ENCODE measurements at regions of chr12 and their contacts with region 1.

Region 1: DNA sequence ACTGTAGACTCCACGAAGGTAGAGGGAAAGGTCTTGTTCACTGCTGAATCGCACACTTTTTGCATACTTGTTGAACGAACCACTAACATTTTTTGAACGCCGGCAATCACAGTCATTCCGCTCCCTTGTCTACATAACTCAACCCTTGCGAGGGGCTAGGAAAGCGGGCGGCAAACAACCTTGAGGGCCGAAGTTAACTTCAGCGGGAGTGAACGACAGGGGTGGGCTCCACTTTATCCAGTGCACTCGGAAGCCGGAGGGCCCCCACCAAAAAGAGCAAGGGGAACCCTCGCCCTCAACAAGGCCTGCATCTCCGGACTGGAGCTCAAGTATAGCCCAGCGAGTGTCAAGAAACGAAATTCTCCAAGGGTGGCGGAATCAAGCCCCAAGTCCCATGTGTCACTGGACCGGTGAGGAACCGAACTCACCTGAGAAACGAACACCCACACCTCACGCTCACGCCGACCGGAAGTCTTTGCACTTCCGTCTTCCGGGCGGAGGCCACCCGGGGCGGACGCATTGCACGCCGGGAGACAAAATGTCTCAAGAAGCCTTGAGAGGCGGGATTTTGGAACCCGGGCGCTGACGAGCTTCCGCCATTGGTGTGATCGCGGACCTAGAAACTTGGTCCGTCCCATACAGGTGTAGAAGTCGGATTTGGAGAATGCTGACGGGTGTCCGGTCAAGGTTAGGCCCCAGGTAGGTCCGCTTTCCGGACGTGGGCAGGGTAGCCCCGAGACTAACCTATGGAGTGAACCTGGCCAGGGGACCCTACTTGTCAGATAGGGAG is at the start of gene LLPH:
- DNase-seq: peak; percentile 95
- H3K4me3 ChIP-seq: peak within 1 kb of the TSS; percentile 98
- H3K27ac ChIP-seq: peak within 1 kb of the TSS; percentile 51
- H3K4me1 ChIP-seq: peaks cover 29% of the 10 kb centered on the region
- CTCF ChIP-seq: no peak
- total RNA-seq, gene LLPH: 5.7 and 17.0 TPM in 2 replicates

Region 2: DNA sequence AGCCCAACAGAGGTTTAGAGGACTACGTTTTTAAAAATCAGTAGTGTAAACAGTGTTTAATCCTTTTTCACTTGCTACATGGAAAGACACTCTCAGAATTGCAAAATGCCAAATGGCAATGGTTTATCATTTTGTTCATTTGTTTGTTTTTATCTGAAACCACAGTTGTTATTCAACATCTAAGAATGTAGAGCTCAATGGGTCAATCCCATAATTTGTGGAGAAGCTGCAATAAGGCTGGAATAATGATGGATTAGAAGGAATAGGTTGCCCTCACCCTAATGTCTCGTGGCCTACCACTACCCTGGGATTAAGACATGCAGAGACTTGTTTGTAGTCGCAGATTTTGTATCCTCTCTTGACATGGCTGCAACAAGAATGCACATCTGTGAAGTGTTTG is 115.7 kb before region 1 on chr12:
- CTCF ChIA-PET with region 1: no interaction called
- POLR2A ChIA-PET with region 1: no interaction called
- intact Hi-C with region 1: no loop called
- DNase-seq: no peak
- H3K4me3 ChIP-seq: no peak overlapping the region
- H3K27ac ChIP-seq: no peak overlapping the region
- H3K4me1 ChIP-seq: no peaks in the 10 kb centered on the region
- CTCF ChIP-seq: no peak

Region 3: GRCh38 chr12:66144791-66145754 is 14.6 kb after region 1 on chr12:
- CTCF ChIA-PET with region 1: no interaction called
- POLR2A ChIA-PET with region 1: interaction called, 12 read pairs
- intact Hi-C with region 1: no loop called
- DNase-seq: peak; percentile 44
- H3K4me3 ChIP-seq: no peak overlapping the region
- H3K27ac ChIP-seq: peak overlapping the region; percentile 29
- H3K4me1 ChIP-seq: peaks cover 8% of the 10 kb centered on the region
- CTCF ChIP-seq: peak; percentile 75

Region 4: DNA sequence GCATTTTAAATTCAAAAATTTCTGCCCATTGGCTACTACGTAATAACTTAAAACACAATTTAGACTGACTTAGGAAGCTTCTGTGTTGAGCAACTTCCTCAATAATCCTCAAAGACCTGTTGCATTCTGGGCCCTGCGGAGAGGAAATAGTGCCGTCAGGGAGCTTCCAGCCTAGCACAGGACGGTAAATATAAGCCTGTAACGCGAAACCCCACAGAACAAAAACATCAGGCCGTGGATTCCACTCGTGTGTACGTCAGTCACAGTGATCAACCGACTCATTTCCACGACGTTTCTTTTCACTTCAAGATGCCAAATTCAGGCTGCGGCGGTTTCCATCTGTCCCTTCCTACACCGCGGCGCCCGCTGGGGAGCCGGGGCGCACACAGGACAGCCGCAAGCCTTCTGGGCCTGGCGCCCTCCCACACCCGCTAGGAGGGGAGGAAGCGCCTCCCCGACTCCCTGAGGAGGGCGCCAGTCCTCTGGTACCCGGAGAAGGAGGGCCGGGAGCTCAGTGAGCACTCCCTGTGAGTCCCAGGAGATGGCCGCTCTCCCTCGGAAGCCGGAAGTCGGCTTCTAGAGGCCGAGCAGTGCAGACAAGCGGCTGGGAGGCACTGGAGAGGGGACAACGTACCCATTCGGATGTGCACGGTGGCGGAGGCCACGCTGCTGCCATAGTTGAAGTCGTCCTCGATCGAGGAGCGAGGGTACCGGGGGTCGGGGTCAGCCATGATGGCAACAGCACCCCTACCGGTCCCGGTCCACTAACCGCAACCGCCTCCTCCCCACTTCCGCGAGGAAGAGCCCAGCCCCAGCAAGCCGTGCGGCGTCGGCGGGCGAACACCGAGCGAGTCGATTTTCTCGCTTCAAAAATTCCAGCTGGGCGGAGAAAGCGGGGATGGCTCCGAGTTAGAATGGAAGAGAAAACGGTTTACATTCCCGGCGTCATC is 39.0 kb after region 1 on chr12 and contains the start of gene TMBIM4:
- CTCF ChIA-PET with region 1: interaction called, 3 read pairs
- POLR2A ChIA-PET with region 1: interaction called, 30 read pairs
- intact Hi-C with region 1: loop called (anchors 1 kb)
- DNase-seq: peak; percentile 91
- H3K4me3 ChIP-seq: peak within 1 kb of the TSS; percentile 80
- H3K27ac ChIP-seq: peak within 1 kb of the TSS; percentile 93
- H3K4me1 ChIP-seq: peaks cover 23% of the 10 kb centered on the region
- CTCF ChIP-seq: peak; percentile 73
- total RNA-seq, gene TMBIM4: 16.0 and 19.2 TPM in 2 replicates

Region 5: GRCh38 chr12:66235626-66236281 is 105.3 kb after region 1 on chr12:
- CTCF ChIA-PET with region 1: interaction called, 8 read pairs
- POLR2A ChIA-PET with region 1: interaction called, 8 read pairs
- intact Hi-C with region 1: loop called (anchors 5 kb)
- DNase-seq: peak; percentile 38
- H3K4me3 ChIP-seq: peak overlapping the region; percentile 70
- H3K27ac ChIP-seq: peak overlapping the region; percentile 14
- H3K4me1 ChIP-seq: peaks cover 35% of the 10 kb centered on the region
- CTCF ChIP-seq: peak; percentile 37

Region 6: DNA sequence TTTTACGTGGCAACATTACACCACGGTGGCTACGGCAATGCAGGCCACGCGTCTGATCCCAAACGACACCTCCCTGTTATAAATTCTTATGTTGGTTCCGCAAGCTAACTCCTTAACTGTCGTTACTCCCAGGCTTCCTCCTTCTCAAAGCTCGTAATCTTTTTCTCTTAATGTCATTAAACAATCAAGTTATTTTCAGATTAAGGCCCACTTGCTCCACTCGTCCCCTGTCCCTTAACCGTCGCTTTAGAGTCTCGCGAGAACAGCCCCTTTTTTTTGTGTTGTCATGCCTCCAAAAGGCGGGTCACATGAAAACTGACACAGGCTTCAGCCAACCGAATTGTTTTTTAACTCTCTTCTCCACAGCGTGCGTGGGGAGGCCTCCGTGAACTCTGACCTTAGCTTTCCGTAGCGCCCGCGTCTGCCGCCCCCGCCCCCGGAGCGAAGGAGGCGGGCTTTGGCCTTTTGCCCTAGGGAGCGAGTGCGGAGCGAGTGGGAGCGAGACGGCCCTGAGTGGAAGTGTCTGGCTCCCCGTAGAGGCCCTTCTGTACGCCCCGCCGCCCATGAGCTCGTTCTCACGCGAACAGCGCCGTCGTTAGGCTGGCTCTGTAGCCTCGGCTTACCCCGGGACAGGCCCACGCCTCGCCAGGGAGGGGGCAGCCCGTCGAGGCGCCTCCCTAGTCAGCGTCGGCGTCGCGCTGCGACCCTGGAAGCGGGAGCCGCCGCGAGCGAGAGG is 1138.6 kb after region 1 on chr12 and contains the start of gene CAND1:
- CTCF ChIA-PET with region 1: no interaction called
- POLR2A ChIA-PET with region 1: interaction called, 4 read pairs
- intact Hi-C with region 1: loop called (anchors 5 kb)
- DNase-seq: peak; percentile 99
- H3K4me3 ChIP-seq: peak within 1 kb of the TSS; percentile 93
- H3K27ac ChIP-seq: peak within 1 kb of the TSS; percentile 87
- H3K4me1 ChIP-seq: peaks cover 33% of the 10 kb centered on the region
- CTCF ChIP-seq: 0 out of 2 replicates have a peak, but pooled peaks have one; percentile 12
- total RNA-seq, gene CAND1: 104 and 109 TPM in 2 replicates

Measured in OCI-LY7 (cell line).